Caco-2 (cell line): ENCODE measurements at regions of chr20 and their contacts with region 1.

Region 1: GRCh38 chr20:58944589-58945008 is 36.5 kb upstream of the NELFCD start:
- DNase-seq: no peak
- H3K4me3 ChIP-seq: no peak overlapping the region
- H3K4me3 Mint-ChIP-seq: no peak overlapping the region
- H3K27ac Mint-ChIP-seq: peak overlapping the region; percentile 1
- H3K4me1 ChIP-seq: peaks cover 10% of the 10 kb centered on the region
- H3K4me1 Mint-ChIP-seq: peaks cover 10% of the 10 kb centered on the region
- H3K27me3 ChIP-seq: no peaks in the 10 kb centered on the region
- H3K27me3 Mint-ChIP-seq: peaks cover 17% of the 10 kb centered on the region
- CTCF ChIP-seq: no peak

Region 2: DNA sequence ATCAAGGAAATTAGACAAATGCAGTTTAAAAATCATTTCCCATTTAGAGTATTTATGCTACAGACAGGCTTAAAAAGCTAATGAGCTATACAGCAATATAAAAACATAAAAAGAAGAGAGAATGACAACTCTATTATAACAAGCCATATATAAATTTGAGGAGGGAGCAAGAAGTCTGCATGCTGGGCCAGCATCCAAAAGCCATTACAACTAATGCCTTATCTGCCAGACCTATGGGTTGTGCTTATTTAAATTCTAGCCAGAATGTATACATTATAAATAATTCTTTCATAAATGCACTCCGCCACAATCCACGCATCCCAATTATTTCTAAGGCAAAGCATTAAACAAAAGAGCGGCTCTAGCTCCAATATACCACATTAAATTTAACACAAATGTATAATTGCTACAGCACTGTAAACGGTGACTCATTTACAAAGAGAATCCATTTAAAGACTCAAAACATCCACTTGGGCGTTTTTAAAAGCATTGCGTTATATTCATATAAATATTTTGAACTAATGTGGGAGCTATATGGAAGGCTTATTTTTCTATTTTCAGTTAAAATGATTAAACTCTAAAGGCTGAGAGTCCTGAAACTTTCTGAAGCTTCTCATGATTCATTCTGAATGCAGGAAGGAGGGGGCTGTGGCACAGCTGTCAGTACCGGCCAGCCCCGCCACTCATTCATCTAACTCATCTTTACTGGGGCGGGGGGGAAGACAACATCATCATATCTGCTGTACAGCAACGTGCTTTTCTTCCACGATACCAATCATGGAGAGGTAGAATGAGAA is 672.8 kb before region 1 on chr20:
- CTCF ChIA-PET with region 1: no interaction called
- POLR2A ChIA-PET with region 1: interaction called, 11 read pairs
- intact Hi-C with region 1: no loop called
- DNase-seq: no peak
- H3K4me3 ChIP-seq: no peak overlapping the region
- H3K4me3 Mint-ChIP-seq: no peak overlapping the region
- H3K27ac Mint-ChIP-seq: no peak overlapping the region
- H3K4me1 ChIP-seq: no peaks in the 10 kb centered on the region
- H3K4me1 Mint-ChIP-seq: peaks cover 13% of the 10 kb centered on the region
- H3K27me3 ChIP-seq: no peaks in the 10 kb centered on the region
- H3K27me3 Mint-ChIP-seq: no peaks in the 10 kb centered on the region
- CTCF ChIP-seq: no peak

Region 3: GRCh38 chr20:58393299-58393698 is 551.3 kb before region 1 on chr20:
- CTCF ChIA-PET with region 1: no interaction called
- POLR2A ChIA-PET with region 1: no interaction called
- intact Hi-C with region 1: no loop called
- DNase-seq: no peak
- H3K4me3 ChIP-seq: no peak overlapping the region
- H3K4me3 Mint-ChIP-seq: no peak overlapping the region
- H3K27ac Mint-ChIP-seq: peak overlapping the region; percentile 13
- H3K4me1 ChIP-seq: peaks cover 44% of the 10 kb centered on the region
- H3K4me1 Mint-ChIP-seq: peaks cover 50% of the 10 kb centered on the region
- H3K27me3 ChIP-seq: no peaks in the 10 kb centered on the region
- H3K27me3 Mint-ChIP-seq: no peaks in the 10 kb centered on the region
- CTCF ChIP-seq: no peak

Region 4: GRCh38 chr20:58868795-58869194 is 75.8 kb before region 1 on chr20:
- CTCF ChIA-PET with region 1: no interaction called
- POLR2A ChIA-PET with region 1: no interaction called
- intact Hi-C with region 1: no loop called
- DNase-seq: peak; percentile 53 to 68
- H3K4me3 ChIP-seq: no peak overlapping the region
- H3K4me3 Mint-ChIP-seq: no peak overlapping the region
- H3K27ac Mint-ChIP-seq: no peak overlapping the region
- H3K4me1 ChIP-seq: no peaks in the 10 kb centered on the region
- H3K4me1 Mint-ChIP-seq: peaks cover 6% of the 10 kb centered on the region
- H3K27me3 ChIP-seq: no peaks in the 10 kb centered on the region
- H3K27me3 Mint-ChIP-seq: peaks cover 14% of the 10 kb centered on the region
- CTCF ChIP-seq: peak in 1 of 2 experiments; percentile 40